Right cardiac atrium (tissue), 5 donors: ENCODE measurements at regions of chr1 and their contacts with region 1.

Region 1: DNA sequence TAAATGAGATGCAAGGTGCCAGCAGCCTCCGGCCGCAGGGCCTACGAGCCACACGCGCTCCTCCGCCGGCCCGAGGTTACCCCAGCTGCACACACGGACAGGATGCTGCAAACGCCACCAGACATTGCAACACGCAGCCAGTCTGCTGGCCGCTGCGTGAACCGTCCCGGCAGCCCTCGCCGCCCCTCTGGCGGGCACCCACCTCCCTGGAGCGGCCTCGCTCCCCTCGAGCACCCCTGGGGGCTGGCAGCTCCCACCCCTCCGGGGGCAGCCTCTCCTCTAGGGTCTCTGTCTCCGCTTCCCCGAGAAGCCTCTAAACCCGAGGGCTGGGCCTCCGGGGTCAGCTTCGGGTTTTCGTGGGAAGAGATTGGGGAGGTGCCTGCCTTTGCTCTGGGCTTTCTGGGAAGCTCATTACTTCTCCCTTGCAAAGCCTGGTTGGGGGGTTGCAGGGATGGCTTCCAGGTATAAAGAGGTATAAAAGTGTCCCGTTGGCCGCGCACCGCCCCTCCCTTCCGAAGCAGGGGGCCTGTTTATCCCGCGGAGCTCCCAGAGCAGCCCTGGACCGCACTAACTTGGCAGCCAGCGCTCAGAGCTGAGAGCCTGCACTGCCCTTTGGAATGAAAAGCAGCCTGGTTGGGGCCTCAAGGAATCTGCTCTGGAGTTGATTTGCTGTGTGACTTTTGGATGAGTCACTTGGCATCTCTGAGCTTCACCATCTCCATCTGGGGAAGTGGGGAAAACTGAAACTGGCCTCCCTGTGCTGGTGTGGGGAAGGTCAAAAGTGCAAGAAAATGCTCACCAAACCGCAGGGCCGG is 21.8 kb downstream of the DHRS3 start:
- DNase-seq: peak; percentile 95 to 99 (median 97)
- ATAC-seq: peak; percentile 84 to 87
- H3K4me3 ChIP-seq: peak overlapping the region; percentile 8
- H3K27ac ChIP-seq: peak overlapping the region; percentile 85
- H3K4me1 ChIP-seq: peaks cover 52% of the 10 kb centered on the region
- H3K27me3 ChIP-seq: no peaks in the 10 kb centered on the region

Region 2: GRCh38 chr1:12549460-12550349 is 46.5 kb before region 1 on chr1:
- intact Hi-C with region 1: loop called in 1 of 4 experiments (anchors 10 kb)
- DNase-seq: peak; percentile 76 to 91 (median 87)
- ATAC-seq: peak; percentile 4 to 57
- H3K4me3 ChIP-seq: no peak overlapping the region
- H3K27ac ChIP-seq: peak overlapping the region; percentile 75
- H3K4me1 ChIP-seq: peaks cover 16% of the 10 kb centered on the region
- H3K27me3 ChIP-seq: no peaks in the 10 kb centered on the region

Region 3: DNA sequence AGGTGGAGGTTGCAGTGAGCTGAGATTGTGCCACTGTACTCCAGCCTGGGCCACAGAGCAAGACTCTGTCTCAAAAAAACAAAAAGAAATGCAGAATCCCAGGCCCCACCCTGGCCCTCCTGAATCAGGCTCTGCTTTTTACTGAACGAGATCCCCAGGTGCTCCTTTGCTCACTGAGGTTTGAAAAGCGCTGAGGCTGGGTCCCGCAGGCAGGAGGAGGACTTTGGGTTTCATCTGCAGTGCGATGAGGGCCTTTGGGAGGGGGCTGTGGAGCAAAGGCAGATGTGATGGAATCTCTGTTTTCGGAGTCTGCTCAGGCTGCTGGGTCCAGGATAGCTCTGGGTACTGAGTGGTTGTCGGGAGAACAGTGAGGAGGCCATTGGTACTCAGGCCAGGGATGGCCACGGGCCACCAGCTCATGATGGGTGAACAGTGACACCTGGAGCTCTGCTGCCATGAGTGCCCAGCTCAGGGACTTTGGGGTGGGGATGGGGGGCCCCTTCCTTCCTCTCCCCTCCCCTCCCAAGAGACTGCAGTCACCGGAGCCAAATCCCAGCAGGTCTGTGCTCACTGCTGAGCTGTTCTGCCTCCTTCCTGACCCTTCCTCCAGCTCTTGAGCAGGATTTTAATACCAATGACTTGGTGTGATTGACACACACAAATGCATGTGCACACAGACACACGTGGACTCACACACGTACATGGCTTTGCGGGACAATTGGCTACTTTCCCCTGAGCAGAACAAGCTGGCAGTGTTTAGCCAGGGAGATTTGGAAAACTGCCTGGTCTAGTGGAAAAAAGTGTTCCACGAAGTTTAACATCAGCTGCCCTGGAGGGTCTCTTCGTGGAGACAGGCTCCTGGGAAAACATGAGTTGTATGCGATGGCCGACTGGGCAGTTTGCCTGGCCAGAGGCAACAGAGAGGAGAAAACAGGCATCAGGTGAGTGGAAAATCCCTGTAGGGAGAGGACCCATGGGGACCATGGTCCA is 25.4 kb after region 1 on chr1:
- intact Hi-C with region 1: no loop called
- DNase-seq: peak in 1 of 3 donors; percentile 77
- ATAC-seq: no peak
- H3K4me3 ChIP-seq: no peak overlapping the region
- H3K27ac ChIP-seq: no peak overlapping the region
- H3K4me1 ChIP-seq: peaks cover 13% of the 10 kb centered on the region
- H3K27me3 ChIP-seq: no peaks in the 10 kb centered on the region

Region 4: GRCh38 chr1:12636098-12636950 is 40.1 kb after region 1 on chr1:
- intact Hi-C with region 1: no loop called
- DNase-seq: peak; percentile 66 to 79 (median 75)
- ATAC-seq: peak; percentile 77 to 93
- H3K4me3 ChIP-seq: no peak overlapping the region
- H3K27ac ChIP-seq: peak overlapping the region; percentile 88
- H3K4me1 ChIP-seq: peaks cover 4% of the 10 kb centered on the region
- H3K27me3 ChIP-seq: no peaks in the 10 kb centered on the region